Heart right ventricle (tissue), 16 donors: ENCODE measurements at regions of chr1 and their contacts with region 1.

Region 1: DNA sequence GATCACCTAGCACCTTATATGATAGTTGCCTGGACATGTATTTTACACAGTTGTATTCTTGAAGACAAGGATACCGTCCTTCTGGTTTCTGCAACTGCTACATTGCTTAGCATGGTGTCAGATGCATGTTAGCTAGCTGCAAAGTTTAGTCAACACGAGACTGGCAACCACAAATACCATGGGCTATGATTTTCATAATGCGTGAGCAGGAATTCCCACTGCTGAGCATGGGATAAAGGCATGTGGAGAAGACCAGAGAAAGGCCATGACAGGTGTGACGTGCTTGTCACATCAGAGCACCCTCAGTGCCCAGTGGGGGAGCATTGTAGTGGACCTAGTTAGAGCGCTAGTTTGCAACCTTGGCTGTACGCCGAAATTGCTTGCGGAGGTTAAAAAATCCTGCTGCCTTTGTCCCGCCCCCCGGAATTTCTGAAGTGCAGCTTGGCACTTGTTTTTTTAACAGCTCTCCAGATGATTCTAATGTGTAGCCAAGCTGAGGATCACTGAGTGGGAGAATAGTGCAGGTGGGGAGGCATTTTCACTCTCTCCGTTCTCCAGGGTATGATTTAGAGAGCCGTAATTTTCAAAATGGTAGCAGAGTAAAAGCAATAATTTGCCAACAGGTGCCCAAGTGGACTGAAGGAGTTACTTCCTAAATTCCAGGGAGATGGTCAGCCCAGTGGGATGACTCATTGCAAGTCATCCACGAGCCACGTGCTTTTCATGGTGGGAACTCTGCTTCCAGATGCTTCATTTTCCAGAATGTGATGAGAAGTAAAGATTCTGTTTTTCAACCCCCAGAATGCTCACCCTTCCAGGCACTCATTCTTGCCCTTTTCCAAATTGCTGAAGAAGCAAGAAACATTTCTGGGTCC is 81.0 kb downstream of the CNIH3 start:
- DNase-seq: no peak
- ATAC-seq: peak in 1 of 8 donors; percentile 65
- H3K4me3 ChIP-seq: no peak overlapping the region
- H3K27ac ChIP-seq: no peak overlapping the region
- H3K4me1 ChIP-seq: no peaks in the 10 kb centered on the region
- H3K27me3 ChIP-seq: peaks cover 0 to 6% (median 0%) of the 10 kb centered on the region in 7 donors
- CTCF ChIP-seq: no peak

Region 2: DNA sequence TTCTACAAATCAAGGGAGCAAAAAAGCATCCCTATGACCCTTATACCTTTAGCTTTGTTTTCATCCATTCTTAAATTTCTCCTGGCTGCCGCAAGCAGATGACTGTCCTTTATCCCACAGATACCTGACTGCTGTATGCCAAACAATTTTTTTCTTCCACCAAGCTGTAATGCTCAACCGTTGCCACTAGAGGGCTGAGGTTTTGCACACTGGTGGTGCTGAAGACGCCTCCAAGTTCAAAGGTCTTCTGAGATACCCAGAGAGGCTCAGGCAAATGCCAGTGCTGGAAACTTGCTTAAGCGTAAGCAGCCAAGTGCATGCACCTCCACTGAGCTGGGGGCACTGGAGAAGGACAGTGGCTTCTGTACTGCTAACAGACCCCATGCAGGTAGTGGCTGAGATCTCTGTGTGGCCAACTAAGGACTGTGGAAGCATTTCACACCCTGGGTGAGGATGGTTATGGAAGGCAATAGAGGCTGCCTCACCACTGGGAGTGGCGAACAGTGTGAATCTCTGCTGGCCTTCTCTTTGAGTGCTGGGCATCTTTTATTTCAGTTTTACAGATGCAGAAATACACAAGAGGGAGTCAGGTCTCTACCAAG is 52.5 kb before region 1 on chr1:
- intact Hi-C with region 1: no loop called
- DNase-seq: peak in 1 of 2 donors; percentile 41
- ATAC-seq: peak in 7 of 8 donors; percentile 28 to 72 (median 52)
- H3K4me3 ChIP-seq: no peak overlapping the region
- H3K27ac ChIP-seq: no peak overlapping the region
- H3K4me1 ChIP-seq: peaks cover 0 to 8% (median 0%) of the 10 kb centered on the region in 9 donors
- H3K27me3 ChIP-seq: peaks cover 0 to 24% (median 0%) of the 10 kb centered on the region in 7 donors
- CTCF ChIP-seq: peak; percentile 79 to 88 (median 84)

Region 3: DNA sequence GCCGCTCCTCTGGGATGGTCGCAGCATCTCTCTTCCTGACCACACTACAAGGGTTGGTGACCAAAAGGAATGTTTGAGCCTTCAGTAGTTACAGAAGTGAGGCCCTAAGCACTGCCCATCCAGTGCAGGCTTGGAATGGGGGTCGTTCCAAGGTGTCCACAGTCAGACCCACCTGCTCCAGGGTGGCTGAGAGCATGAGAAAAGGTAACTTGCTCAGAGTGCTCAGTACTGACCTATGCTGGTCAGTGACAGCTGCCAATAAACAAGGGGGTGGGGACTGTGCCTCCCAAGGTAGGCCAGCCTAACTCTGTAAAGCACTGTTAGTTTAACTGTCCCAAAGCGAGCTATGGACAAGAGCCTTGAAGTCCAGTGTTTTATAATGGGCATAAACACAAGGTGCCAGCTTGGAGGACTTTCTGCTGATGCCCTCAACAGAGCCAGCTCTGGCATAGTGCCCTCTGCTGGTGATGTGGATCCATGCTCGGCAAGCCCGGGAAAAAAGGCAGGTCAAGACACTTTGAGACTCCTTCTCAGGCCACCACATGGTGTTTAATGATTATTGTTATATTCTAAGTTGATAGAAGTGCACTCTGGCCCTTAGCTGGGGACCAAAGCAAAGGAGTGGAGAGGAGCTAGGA is 154.2 kb after region 1 on chr1:
- intact Hi-C with region 1: loop called in 1 of 10 experiments (anchors 5 kb)
- DNase-seq: peak; percentile 18 to 44
- ATAC-seq: peak in 6 of 8 donors; percentile 7 to 53 (median 40)
- H3K4me3 ChIP-seq: no peak overlapping the region
- H3K27ac ChIP-seq: no peak overlapping the region
- H3K4me1 ChIP-seq: no peaks in the 10 kb centered on the region
- H3K27me3 ChIP-seq: peaks cover 0 to 7% (median 0%) of the 10 kb centered on the region in 7 donors
- CTCF ChIP-seq: peak; percentile 16 to 76 (median 54)

Region 4: DNA sequence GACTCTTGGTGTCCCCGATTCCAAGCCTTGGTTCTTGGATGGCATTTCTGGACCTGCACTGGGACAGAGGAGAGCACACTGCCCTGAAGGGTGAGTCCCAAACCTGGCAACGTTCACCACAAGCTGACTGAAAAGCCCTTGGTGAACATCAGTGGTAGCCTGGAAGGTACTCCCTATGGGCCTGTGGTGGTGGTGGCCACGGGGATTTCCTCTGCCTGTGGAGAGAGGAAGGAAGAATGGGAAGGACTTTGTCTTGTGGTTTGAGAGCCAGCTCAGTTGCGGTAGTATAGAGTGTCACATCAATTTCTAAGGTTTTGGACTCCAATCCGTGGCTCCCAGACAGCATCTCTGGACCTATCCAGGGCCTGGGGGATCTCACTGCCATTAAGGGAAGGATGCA is 283.1 kb after region 1 on chr1:
- intact Hi-C with region 1: no loop called
- DNase-seq: no peak
- ATAC-seq: no peak
- H3K4me3 ChIP-seq: no peak overlapping the region
- H3K27ac ChIP-seq: no peak overlapping the region
- H3K4me1 ChIP-seq: no peaks in the 10 kb centered on the region
- H3K27me3 ChIP-seq: no peaks in the 10 kb centered on the region
- CTCF ChIP-seq: no peak